ENCODE measurements at regions of chr1 and their contacts with region 1.

Region 1: GRCh38 chr1:160251687-160252526 is 10.4 kb downstream of the DCAF8 start:
- DNase-seq: peak; percentile 33 to 79
- ATAC-seq: peak; percentile 87 to 99 (median 93)
- H3K4me3 ChIP-seq: no peak overlapping the region
- H3K4me3 Mint-ChIP-seq: no peak overlapping the region
- H3K27ac ChIP-seq: no peak overlapping the region
- H3K27ac Mint-ChIP-seq: peak overlapping the region; percentile 2 to 76
- H3K4me1 ChIP-seq: no peaks in the 10 kb centered on the region
- H3K4me1 Mint-ChIP-seq: peaks cover 6 to 26% of the 10 kb centered on the region in 2 donors
- H3K27me3 ChIP-seq: no peaks in the 10 kb centered on the region
- H3K27me3 Mint-ChIP-seq: no peaks in the 10 kb centered on the region
- CTCF ChIP-seq: peak; percentile 61

Region 2: DNA sequence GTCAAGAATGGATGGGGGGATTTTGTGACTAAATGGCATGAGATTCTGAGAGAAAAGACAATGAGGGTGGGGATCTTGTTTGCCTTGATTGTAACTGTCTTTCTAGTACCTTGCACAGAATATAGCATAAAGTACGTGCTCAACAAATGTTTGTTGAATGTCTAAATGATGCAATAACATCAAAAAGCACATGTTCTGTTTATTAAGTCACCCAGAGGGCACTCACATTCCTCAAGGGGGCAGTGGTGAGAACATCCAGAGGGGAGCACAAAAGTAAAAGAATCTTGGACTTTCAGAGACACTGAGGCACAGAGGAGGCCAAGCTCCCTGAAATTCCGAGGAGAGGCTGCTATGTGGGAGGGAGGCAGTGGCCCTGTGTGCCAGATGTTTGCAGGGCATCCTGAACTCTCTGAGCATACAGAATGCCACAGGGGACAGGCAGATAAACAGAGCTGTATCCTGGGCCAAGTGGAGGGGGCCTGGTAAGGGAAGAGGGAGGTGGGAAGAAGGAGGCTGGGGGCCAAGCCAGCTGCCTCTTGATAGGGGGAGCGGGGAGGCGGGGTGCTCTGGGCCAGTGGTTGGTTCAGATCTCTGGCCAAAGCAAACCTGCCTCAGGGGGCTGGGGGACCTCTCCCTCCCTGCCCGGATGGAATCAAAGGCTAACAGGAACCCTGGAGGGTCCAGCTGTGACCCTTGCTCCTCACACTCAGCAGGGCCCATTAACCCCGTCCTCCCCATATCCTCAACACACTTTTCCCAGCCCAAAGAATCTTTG is 142.8 kb before region 1 on chr1:
- intact Hi-C with region 1: loop called (anchors 2 kb)
- DNase-seq: peak in 1 of 2 donors; percentile 67
- ATAC-seq: peak in 2 of 3 donors; percentile 58 to 59
- H3K4me3 ChIP-seq: no peak overlapping the region
- H3K4me3 Mint-ChIP-seq: no peak overlapping the region
- H3K27ac ChIP-seq: no peak overlapping the region
- H3K27ac Mint-ChIP-seq: no peak overlapping the region
- H3K4me1 ChIP-seq: no peaks in the 10 kb centered on the region
- H3K4me1 Mint-ChIP-seq: no peaks in the 10 kb centered on the region
- H3K27me3 ChIP-seq: no peaks in the 10 kb centered on the region
- H3K27me3 Mint-ChIP-seq: peaks cover 6 to 18% of the 10 kb centered on the region in 2 donors
- CTCF ChIP-seq: no peak

Region 3: DNA sequence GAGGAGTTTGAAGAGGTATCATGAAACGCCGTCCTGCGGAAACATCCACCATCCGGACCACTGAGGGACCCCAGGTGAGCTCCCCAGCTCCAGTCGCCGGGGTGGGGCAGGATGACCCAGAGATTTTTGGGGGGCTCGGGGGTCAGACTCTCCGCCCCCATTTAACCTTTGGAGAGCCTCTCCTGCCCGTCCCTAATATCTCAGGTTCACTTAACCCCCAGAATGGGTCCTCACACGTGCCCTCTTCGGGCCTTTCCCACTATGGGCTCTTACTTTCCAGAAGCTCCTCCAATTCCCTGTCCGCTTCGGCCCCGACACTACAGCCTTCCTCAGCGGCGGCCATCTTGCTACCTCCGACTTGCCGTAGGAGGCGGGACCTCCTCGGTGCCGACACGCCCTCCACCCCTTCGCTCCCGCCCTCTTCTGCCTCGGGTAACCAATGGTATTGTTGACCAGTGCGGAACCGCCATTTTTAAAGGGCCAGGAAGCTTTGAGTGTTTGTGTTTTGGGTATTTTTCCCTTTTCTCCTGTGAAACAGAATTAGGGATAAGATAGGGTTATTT is 33.0 kb after region 1 on chr1 and contains the start of gene PEX19:
- intact Hi-C with region 1: no loop called
- DNase-seq: peak; percentile 93 to 96
- ATAC-seq: peak; percentile 100
- H3K4me3 ChIP-seq: peak within 1 kb of the TSS; percentile 94
- H3K4me3 Mint-ChIP-seq: peak within 1 kb of the TSS; percentile 98
- H3K27ac ChIP-seq: peak within 1 kb of the TSS; percentile 76
- H3K27ac Mint-ChIP-seq: peak within 1 kb of the TSS; percentile 87 to 97
- H3K4me1 ChIP-seq: peaks cover 23% of the 10 kb centered on the region
- H3K4me1 Mint-ChIP-seq: peaks cover 25 to 26% of the 10 kb centered on the region in 2 donors
- H3K27me3 ChIP-seq: no peaks in the 10 kb centered on the region
- H3K27me3 Mint-ChIP-seq: no peaks in the 10 kb centered on the region
- CTCF ChIP-seq: no peak
- total RNA-seq, gene PEX19: 41.5 to 48.8 (median 47.8) TPM

Region 4: GRCh38 chr1:160605205-160605604 is 353.3 kb after region 1 on chr1:
- intact Hi-C with region 1: no loop called
- DNase-seq: peak in 1 of 2 donors; percentile 37
- ATAC-seq: no peak
- H3K4me3 ChIP-seq: no peak overlapping the region
- H3K4me3 Mint-ChIP-seq: no peak overlapping the region
- H3K27ac ChIP-seq: no peak overlapping the region
- H3K27ac Mint-ChIP-seq: peak overlapping the region in 1 of 2 donors; percentile 84
- H3K4me1 ChIP-seq: peaks cover 12% of the 10 kb centered on the region
- H3K4me1 Mint-ChIP-seq: peaks cover 11 to 12% of the 10 kb centered on the region in 2 donors
- H3K27me3 ChIP-seq: no peaks in the 10 kb centered on the region
- H3K27me3 Mint-ChIP-seq: no peaks in the 10 kb centered on the region
- CTCF ChIP-seq: no peak

Region 5: GRCh38 chr1:160830321-160831153 is 578.6 kb after region 1 on chr1:
- intact Hi-C with region 1: no loop called
- DNase-seq: peak; percentile 43 to 84
- ATAC-seq: peak; percentile 57 to 75 (median 71)
- H3K4me3 ChIP-seq: no peak overlapping the region
- H3K4me3 Mint-ChIP-seq: no peak overlapping the region
- H3K27ac ChIP-seq: no peak overlapping the region
- H3K27ac Mint-ChIP-seq: peak overlapping the region; percentile 27 to 86
- H3K4me1 ChIP-seq: peaks cover 14% of the 10 kb centered on the region
- H3K4me1 Mint-ChIP-seq: peaks cover 47 to 50% of the 10 kb centered on the region in 2 donors
- H3K27me3 ChIP-seq: no peaks in the 10 kb centered on the region
- H3K27me3 Mint-ChIP-seq: no peaks in the 10 kb centered on the region
- CTCF ChIP-seq: peak; percentile 53

Measured in natural killer cell (primary cell).